ENCODE measurements at regions of chr18 and their contacts with region 1.

Region 1: GRCh38 chr18:48663931-48664847 is 125.4 kb downstream of the CTIF start:
- DNase-seq: peak in 3 of 4 donors; percentile 60 to 93 (median 68)
- ATAC-seq: peak; percentile 78
- H3K4me3 ChIP-seq: no peak overlapping the region
- H3K27ac ChIP-seq: no peak overlapping the region
- H3K4me1 ChIP-seq: peaks cover 0 to 37% of the 10 kb centered on the region in 2 donors
- H3K27me3 ChIP-seq: no peaks in the 10 kb centered on the region
- CTCF ChIP-seq: peak; percentile 85 to 88

Region 2: GRCh38 chr18:48475635-48476549 is 188.3 kb before region 1 on chr18:
- intact Hi-C with region 1: loop called in 1 of 2 experiments (anchors 5 kb)
- DNase-seq: peak in 2 of 4 donors; percentile 57 to 80
- ATAC-seq: peak; percentile 97
- H3K4me3 ChIP-seq: no peak overlapping the region
- H3K27ac ChIP-seq: no peak overlapping the region
- H3K4me1 ChIP-seq: no peaks in the 10 kb centered on the region
- H3K27me3 ChIP-seq: no peaks in the 10 kb centered on the region
- CTCF ChIP-seq: peak; percentile 82 to 84

Region 3: GRCh38 chr18:48514786-48515185 is 149.4 kb before region 1 on chr18:
- intact Hi-C with region 1: no loop called
- DNase-seq: no peak
- ATAC-seq: no peak
- H3K4me3 ChIP-seq: no peak overlapping the region
- H3K27ac ChIP-seq: no peak overlapping the region
- H3K4me1 ChIP-seq: no peaks in the 10 kb centered on the region
- H3K27me3 ChIP-seq: no peaks in the 10 kb centered on the region
- CTCF ChIP-seq: no peak